Naive thymus-derived CD4-positive, alpha-beta T cell (primary cell): ENCODE measurements at regions of chr11 and their contacts with region 1.

Region 1: GRCh38 chr11:17077520-17078401 is at the start of gene RPS13:
- DNase-seq: peak; percentile 76 to 95 (median 93)
- ATAC-seq: peak; percentile 98
- H3K4me3 ChIP-seq: peak within 1 kb of the TSS; percentile 87
- H3K4me3 Mint-ChIP-seq: peak within 1 kb of the TSS; percentile 91 to 99 (median 98)
- H3K27ac ChIP-seq: peak within 1 kb of the TSS; percentile 91
- H3K27ac Mint-ChIP-seq: peak within 1 kb of the TSS; percentile 96 to 99 (median 99)
- H3K4me1 ChIP-seq: peaks cover 12 to 27% of the 10 kb centered on the region in 2 donors
- H3K4me1 Mint-ChIP-seq: peaks cover 25 to 60% (median 37%) of the 10 kb centered on the region in 7 donors
- H3K27me3 ChIP-seq: no peaks in the 10 kb centered on the region
- H3K27me3 Mint-ChIP-seq: no peaks in the 10 kb centered on the region
- total RNA-seq, gene RPS13: 1,062 to 2,591 (median 2,234) TPM

Region 2: GRCh38 chr11:16986434-16987215 is 91.1 kb before region 1 on chr11:
- CTCF ChIA-PET with region 1: no interaction called
- POLR2A ChIA-PET with region 1: no interaction called
- intact Hi-C with region 1: loop called in 1 of 2 experiments (anchors 1 kb)
- DNase-seq: peak in 7 of 9 donors; percentile 6 to 42 (median 24)
- ATAC-seq: peak; percentile 76
- H3K4me3 ChIP-seq: peak overlapping the region; percentile 27
- H3K4me3 Mint-ChIP-seq: peak overlapping the region in 9 of 10 donors; percentile 9 to 63 (median 56)
- H3K27ac ChIP-seq: no peak overlapping the region
- H3K27ac Mint-ChIP-seq: peak overlapping the region; percentile 56 to 86 (median 71)
- H3K4me1 ChIP-seq: peaks cover 9 to 15% of the 10 kb centered on the region in 2 donors
- H3K4me1 Mint-ChIP-seq: peaks cover 12 to 33% (median 24%) of the 10 kb centered on the region in 7 donors
- H3K27me3 ChIP-seq: no peaks in the 10 kb centered on the region
- H3K27me3 Mint-ChIP-seq: no peaks in the 10 kb centered on the region

Region 3: GRCh38 chr11:17207317-17208258 is 129.8 kb after region 1 on chr11 and contains the start of gene PIK3C2A:
- CTCF ChIA-PET with region 1: interaction called, 3 read pairs
- POLR2A ChIA-PET with region 1: interaction called, 9 read pairs
- intact Hi-C with region 1: loop called (anchors 1 kb)
- DNase-seq: peak; percentile 84 to 94 (median 91)
- ATAC-seq: peak; percentile 98
- H3K4me3 ChIP-seq: peak within 1 kb of the TSS; percentile 93
- H3K4me3 Mint-ChIP-seq: peak within 1 kb of the TSS; percentile 90 to 99 (median 98)
- H3K27ac ChIP-seq: peak within 1 kb of the TSS; percentile 93
- H3K27ac Mint-ChIP-seq: peak within 1 kb of the TSS; percentile 87 to 99 (median 97)
- H3K4me1 ChIP-seq: peaks cover 15 to 19% of the 10 kb centered on the region in 2 donors
- H3K4me1 Mint-ChIP-seq: peaks cover 34 to 57% (median 48%) of the 10 kb centered on the region in 7 donors
- H3K27me3 ChIP-seq: no peaks in the 10 kb centered on the region
- H3K27me3 Mint-ChIP-seq: no peaks in the 10 kb centered on the region
- total RNA-seq, gene PIK3C2A: 25.4 to 56.4 (median 42.0) TPM

Region 4: DNA sequence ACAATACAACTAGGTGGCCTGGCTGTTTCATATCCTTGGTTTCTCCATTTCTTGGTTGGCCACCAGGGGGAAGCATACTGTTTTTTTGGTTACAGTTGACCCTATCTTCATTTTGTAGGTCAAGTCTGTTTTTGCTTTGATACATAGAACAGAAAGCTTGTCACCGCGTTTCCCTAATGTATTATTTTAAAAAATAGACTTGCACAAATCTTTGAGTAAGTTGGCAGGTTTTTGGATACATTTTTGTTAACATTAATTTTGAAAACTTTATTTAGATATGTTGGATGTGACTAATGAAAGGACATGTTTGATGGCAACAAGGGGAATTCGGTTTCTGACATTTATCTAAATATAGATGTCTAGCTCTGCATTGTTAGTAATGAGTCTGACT is 276.8 kb after region 1 on chr11:
- CTCF ChIA-PET with region 1: no interaction called
- POLR2A ChIA-PET with region 1: interaction called, 3 read pairs
- intact Hi-C with region 1: loop called (anchors 1 to 5 kb)
- DNase-seq: peak in 8 of 9 donors; percentile 27 to 55 (median 50)
- ATAC-seq: peak; percentile 43
- H3K4me3 ChIP-seq: no peak overlapping the region
- H3K4me3 Mint-ChIP-seq: peak overlapping the region in 9 of 10 donors; percentile 83 to 95 (median 90)
- H3K27ac ChIP-seq: no peak overlapping the region
- H3K27ac Mint-ChIP-seq: peak overlapping the region in 6 of 9 donors; percentile 29 to 84 (median 60)
- H3K4me1 ChIP-seq: peaks cover 10% of the 10 kb centered on the region in 2 donors
- H3K4me1 Mint-ChIP-seq: peaks cover 28 to 31% (median 29%) of the 10 kb centered on the region in 7 donors
- H3K27me3 ChIP-seq: no peaks in the 10 kb centered on the region
- H3K27me3 Mint-ChIP-seq: peaks cover 0 to 49% (median 0%) of the 10 kb centered on the region in 5 donors

Region 5: DNA sequence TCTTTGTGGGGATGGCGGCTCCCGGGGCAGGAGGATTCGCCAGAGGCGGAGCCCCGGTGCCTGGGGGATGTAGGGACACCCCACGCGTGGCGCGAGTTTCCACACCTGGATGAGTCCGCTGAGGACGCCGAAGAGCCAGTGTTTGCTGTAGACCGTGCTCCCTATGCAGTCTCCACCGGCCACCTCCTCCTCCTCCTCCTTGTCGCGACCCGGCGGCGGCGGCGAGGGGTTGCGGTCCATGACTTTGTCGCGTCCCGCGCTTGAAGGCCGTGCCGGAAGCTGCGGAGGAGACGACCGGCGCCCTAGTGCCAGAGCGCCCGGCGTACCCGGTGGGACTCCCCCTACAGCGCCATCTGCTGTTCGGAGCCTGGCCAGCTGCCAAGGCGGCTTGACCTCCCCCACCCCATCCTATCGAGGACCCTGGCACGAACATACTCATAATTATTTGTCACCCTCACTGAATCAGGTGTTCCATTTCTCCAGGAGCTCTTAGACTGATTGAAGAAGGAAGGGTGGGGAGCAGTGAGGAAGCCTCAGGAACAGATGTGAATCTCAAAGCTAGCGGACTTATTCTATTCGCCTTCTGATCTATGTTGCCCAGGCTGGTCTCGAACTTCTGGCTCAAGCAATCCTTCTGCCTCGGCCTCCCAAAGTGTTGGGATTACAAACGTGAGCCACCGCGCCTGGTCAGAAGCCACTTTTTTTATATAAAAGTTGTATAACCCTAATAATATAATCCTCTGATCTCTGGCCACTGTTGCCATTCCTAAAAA is 1028.2 kb after region 1 on chr11 and contains the start of gene SAAL1:
- CTCF ChIA-PET with region 1: no interaction called
- POLR2A ChIA-PET with region 1: interaction called, 3 read pairs
- intact Hi-C with region 1: loop called in 1 of 2 experiments (anchors 10 kb)
- DNase-seq: peak; percentile 80 to 95 (median 84)
- ATAC-seq: peak; percentile 99
- H3K4me3 ChIP-seq: peak within 1 kb of the TSS; percentile 93
- H3K4me3 Mint-ChIP-seq: peak within 1 kb of the TSS; percentile 84 to 95 (median 93)
- H3K27ac ChIP-seq: peak within 1 kb of the TSS; percentile 78
- H3K27ac Mint-ChIP-seq: peak within 1 kb of the TSS; percentile 77 to 93 (median 90)
- H3K4me1 ChIP-seq: peaks cover 14 to 15% of the 10 kb centered on the region in 2 donors
- H3K4me1 Mint-ChIP-seq: peaks cover 21 to 54% (median 42%) of the 10 kb centered on the region in 7 donors
- H3K27me3 ChIP-seq: no peaks in the 10 kb centered on the region
- H3K27me3 Mint-ChIP-seq: peaks cover 0 to 15% (median 0%) of the 10 kb centered on the region in 5 donors
- total RNA-seq, gene SAAL1: 16.0 to 25.3 (median 19.3) TPM

Region 6: GRCh38 chr11:19013181-19013857 is 1935.6 kb after region 1 on chr11:
- CTCF ChIA-PET with region 1: no interaction called
- POLR2A ChIA-PET with region 1: no interaction called
- intact Hi-C with region 1: no loop called
- DNase-seq: no peak
- ATAC-seq: no peak
- H3K4me3 ChIP-seq: no peak overlapping the region
- H3K4me3 Mint-ChIP-seq: no peak overlapping the region
- H3K27ac ChIP-seq: no peak overlapping the region
- H3K27ac Mint-ChIP-seq: no peak overlapping the region
- H3K4me1 ChIP-seq: no peaks in the 10 kb centered on the region
- H3K4me1 Mint-ChIP-seq: no peaks in the 10 kb centered on the region
- H3K27me3 ChIP-seq: no peaks in the 10 kb centered on the region
- H3K27me3 Mint-ChIP-seq: peaks cover 9 to 57% (median 41%) of the 10 kb centered on the region in 5 donors